ENCODE measurements at regions of chr2 and their contacts with region 1.

Region 1: GRCh38 chr2:231706731-231707624 is 1.3 kb upstream of the PTMA start:
- DNase-seq: peak; percentile 100
- H3K4me3 ChIP-seq: peak overlapping the region; percentile 71 to 91 (median 86)
- H3K27ac ChIP-seq: peak overlapping the region; percentile 96 to 100 (median 99)
- H3K4me1 ChIP-seq: peaks cover 3 to 40% (median 32%) of the 10 kb centered on the region in 4 donors
- H3K27me3 ChIP-seq: no peaks in the 10 kb centered on the region
- CTCF ChIP-seq: peak; percentile 43 to 76 (median 68)
- EP300 ChIP-seq: no peak
- POLR2A ChIP-seq: peak; percentile 81 to 86

Region 2: DNA sequence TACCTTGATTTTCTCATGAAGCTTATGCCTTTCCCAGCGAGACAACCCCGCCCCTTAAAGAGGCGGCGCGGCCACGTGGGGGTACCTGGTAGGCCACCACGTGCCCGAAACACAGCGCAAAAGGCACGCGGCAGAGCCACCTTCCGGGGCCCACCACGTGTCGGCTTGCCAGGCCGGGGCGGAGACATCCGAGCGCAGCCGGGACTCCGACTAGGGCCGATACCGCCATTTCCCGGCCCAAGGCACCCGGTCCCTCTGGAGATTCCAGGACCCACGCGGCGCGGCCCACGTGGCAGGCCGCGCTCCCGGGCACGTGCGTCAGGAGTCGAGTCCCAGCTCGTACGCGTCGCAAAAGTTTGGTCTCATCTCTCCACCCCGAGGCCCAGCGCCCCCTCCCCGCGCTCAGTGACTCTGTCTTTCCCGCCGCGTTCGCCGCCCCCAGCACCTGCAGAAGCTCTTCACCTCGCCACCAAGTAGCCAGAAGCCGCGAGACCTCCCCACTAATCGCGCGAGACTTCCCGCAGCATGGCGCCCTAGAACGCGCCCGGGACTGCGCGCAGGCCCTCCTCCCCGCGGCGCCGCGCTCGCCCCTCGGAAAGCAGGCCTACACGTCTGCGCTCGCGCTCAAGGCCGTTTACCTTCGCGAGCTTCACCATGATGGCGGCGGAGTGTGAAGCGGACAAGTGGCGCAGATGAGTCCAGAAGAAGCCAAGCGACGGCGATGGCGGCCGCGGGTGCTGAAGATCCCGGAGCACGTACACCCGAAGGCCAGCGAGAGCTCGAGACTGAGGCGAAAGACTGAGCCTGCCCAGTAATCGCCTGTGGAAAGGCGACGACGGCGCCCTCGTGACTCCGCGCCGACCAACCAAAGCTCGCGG is 243.0 kb before region 1 on chr2 and contains the start of gene NCL:
- intact Hi-C with region 1: loop called (anchors 10 kb)
- DNase-seq: peak; percentile 99
- H3K4me3 ChIP-seq: peak within 1 kb of the TSS; percentile 83 to 93 (median 90)
- H3K27ac ChIP-seq: peak within 1 kb of the TSS; percentile 94 to 99 (median 98)
- H3K4me1 ChIP-seq: peaks cover 0 to 43% (median 31%) of the 10 kb centered on the region in 4 donors
- H3K27me3 ChIP-seq: no peaks in the 10 kb centered on the region
- CTCF ChIP-seq: no peak
- EP300 ChIP-seq: no peak
- POLR2A ChIP-seq: peak; percentile 94 to 98
- total RNA-seq, gene NCL: 100 to 227 (median 126) TPM

Region 3: GRCh38 chr2:231489990-231490389 is 217.0 kb before region 1 on chr2:
- intact Hi-C with region 1: no loop called
- DNase-seq: no peak
- H3K4me3 ChIP-seq: no peak overlapping the region
- H3K27ac ChIP-seq: no peak overlapping the region
- H3K4me1 ChIP-seq: no peaks in the 10 kb centered on the region
- H3K27me3 ChIP-seq: no peaks in the 10 kb centered on the region
- CTCF ChIP-seq: peak in 1 of 4 experiments; percentile 7
- EP300 ChIP-seq: no peak
- POLR2A ChIP-seq: no peak

Region 4: DNA sequence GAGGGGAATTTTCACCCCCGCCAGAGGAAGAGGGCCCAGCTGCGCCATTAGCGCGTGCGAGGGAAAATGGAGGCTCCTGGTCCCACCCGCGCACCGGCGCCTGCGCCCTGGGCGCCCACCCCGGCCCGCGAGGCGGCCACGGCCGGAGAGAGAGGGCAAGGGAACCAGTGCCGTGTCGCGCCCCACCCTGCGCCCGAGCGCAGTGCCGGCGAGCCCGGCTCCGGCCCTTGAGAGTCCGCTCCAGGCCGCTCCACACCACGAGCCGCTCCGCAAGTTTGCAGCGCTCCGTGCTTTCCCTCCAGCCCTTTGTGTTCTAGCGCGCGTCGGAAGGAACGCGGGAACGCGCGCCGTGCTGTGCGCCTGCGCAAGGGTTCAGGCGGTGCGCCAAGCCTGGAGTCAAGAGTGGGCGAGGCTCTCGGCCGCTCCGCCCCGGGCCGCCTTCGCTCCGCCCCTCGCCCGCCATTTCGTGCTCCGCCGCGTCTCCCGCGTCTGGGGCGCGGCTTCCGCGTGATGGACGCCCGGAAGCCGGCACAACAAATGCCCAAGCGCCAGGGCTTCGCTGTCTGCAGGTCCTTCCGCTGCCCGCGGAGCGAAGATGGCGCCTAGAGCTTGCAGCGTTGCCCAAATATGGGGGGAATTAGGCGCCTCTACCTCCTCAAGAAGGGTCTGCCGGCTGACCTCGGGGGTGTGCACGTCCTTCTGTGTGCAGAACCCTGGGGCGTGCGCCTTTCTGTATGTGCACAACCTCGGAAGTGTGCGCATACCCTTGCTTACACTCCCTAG is 44.8 kb before region 1 on chr2:
- intact Hi-C with region 1: loop called (anchors 1 kb)
- DNase-seq: peak; percentile 98
- H3K4me3 ChIP-seq: peak overlapping the region; percentile 24 to 49 (median 43)
- H3K27ac ChIP-seq: peak overlapping the region; percentile 95 to 99 (median 97)
- H3K4me1 ChIP-seq: peaks cover 4 to 40% (median 30%) of the 10 kb centered on the region in 4 donors
- H3K27me3 ChIP-seq: no peaks in the 10 kb centered on the region
- CTCF ChIP-seq: peak in 1 of 4 experiments; percentile 8
- EP300 ChIP-seq: peak in 1 of 4 donors; percentile 81
- POLR2A ChIP-seq: peak in 1 of 2 donors; percentile 66

Region 5: GRCh38 chr2:231765496-231765929 is 58.5 kb after region 1 on chr2:
- intact Hi-C with region 1: no loop called
- DNase-seq: no peak
- H3K4me3 ChIP-seq: no peak overlapping the region
- H3K27ac ChIP-seq: no peak overlapping the region
- H3K4me1 ChIP-seq: no peaks in the 10 kb centered on the region
- H3K27me3 ChIP-seq: no peaks in the 10 kb centered on the region
- CTCF ChIP-seq: no peak
- EP300 ChIP-seq: no peak
- POLR2A ChIP-seq: no peak

Region 6: DNA sequence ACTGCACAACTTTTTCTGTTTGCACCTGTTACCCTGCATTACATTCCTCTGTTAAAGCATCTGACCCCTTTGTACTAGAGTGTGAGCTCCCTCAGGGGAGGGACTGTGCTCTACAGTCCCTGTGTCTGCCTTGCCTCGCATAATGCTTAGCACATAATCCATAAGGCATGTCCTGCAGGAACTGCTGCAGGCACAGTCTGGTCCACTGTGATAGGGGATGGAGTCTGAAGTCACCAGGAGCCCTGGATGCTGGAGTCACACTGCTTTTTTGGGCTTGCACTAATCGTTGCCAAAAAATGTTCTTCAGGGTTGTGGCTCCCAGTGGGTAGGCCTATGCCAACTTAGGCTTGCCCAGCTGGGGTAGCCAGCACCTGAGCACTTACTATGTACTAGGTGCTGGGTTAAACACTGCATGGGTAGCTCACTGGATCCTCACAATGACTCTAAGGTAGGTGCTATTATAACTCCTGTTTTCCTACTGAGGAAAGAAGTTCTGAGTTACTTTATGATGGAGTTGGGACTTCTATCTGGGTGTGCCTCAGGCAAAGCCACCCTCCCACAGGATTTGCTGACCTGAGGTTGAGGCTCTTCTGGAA is 112.6 kb after region 1 on chr2:
- intact Hi-C with region 1: no loop called
- DNase-seq: no peak
- H3K4me3 ChIP-seq: no peak overlapping the region
- H3K27ac ChIP-seq: no peak overlapping the region
- H3K4me1 ChIP-seq: no peaks in the 10 kb centered on the region
- H3K27me3 ChIP-seq: no peaks in the 10 kb centered on the region
- CTCF ChIP-seq: no peak
- EP300 ChIP-seq: no peak
- POLR2A ChIP-seq: no peak

Measured in sigmoid colon (tissue), 7 donors.